Caki2 (cell line): ENCODE measurements at regions of chr12 and their contacts with region 1.

Region 1: GRCh38 chr12:31662176-31662849 is 2.8 kb downstream of the ETFBKMT start:
- DNase-seq: no peak

Region 2: DNA sequence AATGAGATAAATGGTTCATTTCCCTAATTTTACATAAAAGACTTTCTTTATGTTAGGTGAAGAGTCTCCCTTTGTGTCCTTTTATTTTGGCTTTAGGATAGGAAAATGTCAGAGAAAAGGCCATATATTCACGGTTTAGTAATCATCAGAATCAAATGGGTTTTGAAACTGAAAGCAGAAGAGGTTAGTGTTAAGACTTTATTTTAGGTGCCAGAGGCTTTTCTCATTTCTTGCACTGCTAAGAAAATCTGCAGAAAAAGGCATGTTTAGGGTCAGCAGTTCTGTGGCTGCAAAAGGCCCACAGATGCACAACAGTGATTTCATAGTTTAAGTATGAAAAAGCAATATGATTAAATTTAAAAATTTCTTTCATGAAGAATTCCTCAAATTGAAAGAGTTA is 256.0 kb before region 1 on chr12:
- in situ Hi-C with region 1: no loop called
- DNase-seq: no peak

Region 3: GRCh38 chr12:32051559-32052414 is 389.5 kb after region 1 on chr12:
- in situ Hi-C with region 1: loop called (anchors 10 kb)
- DNase-seq: peak; percentile 93